ENCODE measurements at regions of chr3 and their contacts with region 1.

Region 1: DNA sequence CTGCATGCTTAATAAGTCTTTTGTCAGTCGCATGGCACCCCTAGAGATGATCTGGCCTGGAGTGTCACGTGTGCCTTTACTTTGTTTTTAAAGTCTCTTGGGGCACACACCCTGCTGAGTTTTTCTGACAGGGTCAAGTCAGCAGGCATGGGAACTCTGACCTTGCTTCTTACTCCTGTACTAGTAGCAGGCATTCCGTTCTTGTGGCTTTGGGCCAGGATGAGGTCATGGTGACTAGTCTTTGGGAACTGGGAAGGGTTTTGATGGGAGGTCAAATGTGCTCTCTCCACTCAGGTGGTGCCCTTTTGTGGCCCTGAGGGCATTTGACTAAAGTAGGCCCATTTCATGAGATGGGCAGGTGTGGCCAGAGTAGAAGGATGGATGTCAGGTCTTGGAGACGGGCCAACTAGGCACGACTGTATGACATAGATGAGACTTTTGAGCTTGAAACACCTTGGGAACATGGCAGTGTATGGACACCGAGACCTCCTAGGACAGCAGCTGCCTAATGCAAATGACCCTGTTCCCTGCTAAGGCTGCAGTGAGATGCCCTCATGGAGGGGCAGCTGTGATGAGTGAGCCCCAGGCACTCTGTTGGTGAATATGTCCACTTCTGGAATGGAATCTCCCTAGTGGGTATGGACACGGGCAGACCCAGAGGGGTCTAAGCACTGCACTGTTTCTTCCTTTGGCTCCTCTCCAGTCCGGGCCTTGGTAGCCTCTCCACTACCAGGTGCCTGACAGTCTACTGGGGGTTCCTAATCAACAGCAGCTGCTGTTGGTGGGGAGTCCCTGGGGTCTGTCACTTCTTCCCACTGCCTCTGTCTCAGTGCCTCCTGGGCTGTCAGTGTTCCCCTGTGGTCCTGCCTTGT is 16.4 kb downstream of the SRPRB start:
- DNase-seq: peak; percentile 33
- H3K4me3 ChIP-seq: no peak overlapping the region
- H3K27ac ChIP-seq: no peak overlapping the region
- H3K27me3 ChIP-seq: no peaks in the 10 kb centered on the region
- CTCF ChIP-seq: peak; percentile 45

Region 2: DNA sequence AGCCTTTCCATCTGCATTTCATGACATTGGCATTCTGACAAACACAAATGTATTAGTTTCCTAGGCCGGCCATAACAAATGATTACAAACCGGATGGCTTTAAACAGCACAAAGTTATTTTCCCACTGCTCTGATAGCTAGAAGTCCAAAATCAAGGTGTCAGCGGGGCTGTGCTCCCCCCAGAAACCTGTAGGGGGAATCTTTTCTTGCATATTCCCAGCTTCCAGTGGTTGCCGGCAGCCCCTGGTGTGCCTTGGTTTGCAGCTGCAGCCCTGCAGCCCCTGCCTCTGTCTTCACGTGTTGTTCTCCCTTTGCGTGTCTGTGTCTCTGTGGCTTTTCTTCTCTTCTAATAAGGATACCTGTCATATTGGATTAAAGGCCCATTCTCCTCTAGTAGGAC is 327.5 kb before region 1 on chr3:
- CTCF ChIA-PET with region 1: interaction called, 10 read pairs
- POLR2A ChIA-PET with region 1: no interaction called
- DNase-seq: no peak
- H3K4me3 ChIP-seq: no peak overlapping the region
- H3K27ac ChIP-seq: no peak overlapping the region
- H3K27me3 ChIP-seq: no peaks in the 10 kb centered on the region
- CTCF ChIP-seq: peak; percentile 49

Region 3: DNA sequence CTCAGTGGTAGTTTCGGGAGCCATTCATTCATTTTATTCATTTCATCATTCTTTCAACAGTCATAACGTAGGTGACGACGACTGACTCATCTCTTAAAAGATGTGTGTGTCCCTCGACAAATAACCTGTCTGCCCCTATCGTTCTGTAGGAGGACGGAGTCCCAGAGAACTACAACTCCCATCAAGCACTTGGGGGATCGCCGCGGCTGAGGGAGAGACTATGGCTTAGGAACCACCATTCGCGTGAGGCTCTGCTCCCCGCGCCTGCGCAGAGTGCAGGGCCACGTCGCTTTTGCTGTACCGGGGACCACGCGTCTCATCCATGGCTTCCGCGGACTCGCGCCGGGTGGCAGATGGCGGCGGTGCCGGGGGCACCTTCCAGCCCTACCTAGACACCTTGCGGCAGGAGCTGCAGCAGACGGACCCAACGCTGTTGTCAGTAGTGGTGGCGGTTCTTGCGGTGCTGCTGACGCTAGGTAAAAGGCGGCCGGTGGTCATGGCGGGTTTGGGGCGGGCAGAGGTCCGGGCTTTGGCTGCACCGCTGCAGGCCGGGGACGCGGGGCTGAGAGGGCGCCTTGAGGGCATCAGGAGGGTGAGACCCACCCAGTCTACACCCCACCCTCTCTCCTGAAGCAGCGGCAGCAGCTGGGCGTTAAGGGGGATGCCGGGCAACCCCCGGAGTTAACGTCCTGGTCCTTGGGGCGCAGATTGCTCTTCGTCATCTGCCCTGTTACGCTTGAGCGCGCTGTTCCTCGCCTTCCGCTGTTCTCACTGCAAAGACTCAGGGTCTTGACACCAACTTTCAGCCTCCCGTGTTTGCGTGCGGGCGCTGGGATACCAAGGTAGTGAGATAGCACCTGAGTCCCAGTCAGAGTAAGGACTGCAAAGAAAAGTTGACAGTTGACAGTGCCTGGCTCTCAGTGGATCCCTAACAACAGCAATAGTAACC is 16.2 kb before region 1 on chr3 and contains the start of gene SRPRB:
- CTCF ChIA-PET with region 1: interaction called, 15 read pairs
- POLR2A ChIA-PET with region 1: no interaction called
- DNase-seq: peak; percentile 77
- H3K4me3 ChIP-seq: peak within 1 kb of the TSS; percentile 96
- H3K27ac ChIP-seq: peak within 1 kb of the TSS; percentile 39
- H3K27me3 ChIP-seq: no peaks in the 10 kb centered on the region
- CTCF ChIP-seq: no peak
- polyA plus RNA-seq, gene SRPRB: 41.8 and 61.6 TPM in 2 replicates

Region 4: DNA sequence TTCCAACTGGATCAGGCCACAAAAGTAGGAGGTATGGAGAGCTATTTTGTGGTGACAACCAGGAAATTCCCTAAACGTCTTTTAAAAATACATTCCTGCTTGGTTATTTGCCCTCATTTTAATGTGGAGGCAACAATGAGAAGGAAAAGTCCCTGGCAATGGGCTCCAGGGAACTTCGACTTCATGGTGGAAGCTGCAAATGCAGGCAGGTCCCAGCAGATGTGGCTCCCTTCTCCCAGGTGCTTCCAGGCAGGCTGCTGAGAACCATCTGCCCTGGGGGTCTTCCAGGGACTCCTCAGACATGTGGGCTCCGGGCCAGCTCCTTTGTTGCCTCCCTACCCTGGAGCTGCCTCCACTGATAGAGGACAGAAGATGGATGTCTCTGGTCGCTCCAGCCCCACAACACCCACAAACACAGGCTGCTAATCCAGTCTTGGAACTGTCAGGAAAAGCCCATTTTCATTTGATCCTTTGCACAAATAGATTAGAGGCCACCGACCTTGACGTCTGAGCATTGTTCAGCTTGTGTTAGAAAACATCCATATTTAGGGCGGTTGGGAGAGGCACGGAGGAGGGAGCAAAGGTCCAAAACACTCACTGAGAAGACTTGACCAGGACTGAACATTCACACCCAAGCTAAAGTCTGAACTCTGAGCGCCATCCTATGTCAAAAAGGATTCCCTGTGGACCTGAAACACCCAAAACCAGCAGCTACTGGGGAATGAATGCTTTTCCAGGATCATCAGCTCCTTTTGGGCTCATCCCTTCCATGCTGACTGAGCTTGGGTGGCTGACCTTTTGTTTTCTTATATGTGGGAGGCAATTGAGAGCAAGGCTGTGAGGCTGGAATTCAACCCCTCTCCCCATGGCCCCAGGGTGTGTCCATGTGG is 237.9 kb after region 1 on chr3:
- CTCF ChIA-PET with region 1: no interaction called
- POLR2A ChIA-PET with region 1: no interaction called
- DNase-seq: no peak
- H3K4me3 ChIP-seq: no peak overlapping the region
- H3K27ac ChIP-seq: no peak overlapping the region
- H3K27me3 ChIP-seq: no peaks in the 10 kb centered on the region
- CTCF ChIP-seq: no peak

Measured in AG04450 (cell line).